Activated CD4-positive, alpha-beta memory T cell treated with anti-CD3 and anti-CD28 coated beads for 36 hours (primary cell): ENCODE measurements at regions of chr12 and their contacts with region 1.

Region 1: GRCh38 chr12:122123051-122123760 is 44.6 kb downstream of the MLXIP start:
- DNase-seq: peak; percentile 79
- H3K4me3 Mint-ChIP-seq: no peak overlapping the region
- H3K27ac Mint-ChIP-seq: no peak overlapping the region
- H3K4me1 Mint-ChIP-seq: peaks cover 25% of the 10 kb centered on the region
- H3K27me3 Mint-ChIP-seq: no peaks in the 10 kb centered on the region

Region 2: DNA sequence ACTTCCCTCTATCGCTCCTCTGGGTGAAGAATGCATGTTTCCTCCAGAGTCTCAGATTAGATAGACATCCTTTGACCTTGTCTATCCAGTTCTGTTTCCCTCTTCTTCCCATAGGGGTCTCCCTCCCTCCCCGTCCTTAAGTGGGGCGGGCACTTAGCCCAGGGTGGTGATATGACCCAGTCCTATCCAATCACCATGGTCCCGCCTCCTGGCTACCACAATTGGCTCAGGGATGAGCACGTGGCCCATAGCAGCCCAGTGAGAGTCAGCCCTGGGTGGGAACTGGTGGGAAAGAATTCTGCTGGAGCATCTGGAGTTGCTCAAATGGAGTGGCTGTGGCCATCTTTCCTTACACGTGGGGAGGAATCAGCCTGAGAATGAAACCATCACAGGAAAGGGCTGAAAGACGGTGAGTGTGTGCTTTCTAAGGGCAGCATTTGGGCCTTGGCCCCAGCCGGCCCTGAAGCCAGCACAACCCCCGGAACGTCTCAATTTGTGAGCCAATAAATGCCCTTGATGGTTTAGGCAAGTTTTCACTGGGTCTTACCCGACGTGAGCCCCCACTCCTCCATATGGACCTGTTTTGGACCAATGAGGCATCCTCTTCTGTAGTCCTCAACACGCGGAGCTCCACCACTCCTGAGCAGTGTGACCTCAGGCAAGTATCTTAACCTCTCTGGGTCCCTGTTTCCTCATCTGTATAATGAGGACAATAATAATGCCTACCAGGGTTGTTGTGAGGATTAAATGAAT is 59.0 kb before region 1 on chr12:
- CTCF ChIA-PET with region 1: interaction called, 25 read pairs
- POLR2A ChIA-PET with region 1: no interaction called
- intact Hi-C with region 1: no loop called
- DNase-seq: peak; percentile 58
- H3K4me3 Mint-ChIP-seq: no peak overlapping the region
- H3K27ac Mint-ChIP-seq: no peak overlapping the region
- H3K4me1 Mint-ChIP-seq: peaks cover 10% of the 10 kb centered on the region
- H3K27me3 Mint-ChIP-seq: no peaks in the 10 kb centered on the region

Region 3: DNA sequence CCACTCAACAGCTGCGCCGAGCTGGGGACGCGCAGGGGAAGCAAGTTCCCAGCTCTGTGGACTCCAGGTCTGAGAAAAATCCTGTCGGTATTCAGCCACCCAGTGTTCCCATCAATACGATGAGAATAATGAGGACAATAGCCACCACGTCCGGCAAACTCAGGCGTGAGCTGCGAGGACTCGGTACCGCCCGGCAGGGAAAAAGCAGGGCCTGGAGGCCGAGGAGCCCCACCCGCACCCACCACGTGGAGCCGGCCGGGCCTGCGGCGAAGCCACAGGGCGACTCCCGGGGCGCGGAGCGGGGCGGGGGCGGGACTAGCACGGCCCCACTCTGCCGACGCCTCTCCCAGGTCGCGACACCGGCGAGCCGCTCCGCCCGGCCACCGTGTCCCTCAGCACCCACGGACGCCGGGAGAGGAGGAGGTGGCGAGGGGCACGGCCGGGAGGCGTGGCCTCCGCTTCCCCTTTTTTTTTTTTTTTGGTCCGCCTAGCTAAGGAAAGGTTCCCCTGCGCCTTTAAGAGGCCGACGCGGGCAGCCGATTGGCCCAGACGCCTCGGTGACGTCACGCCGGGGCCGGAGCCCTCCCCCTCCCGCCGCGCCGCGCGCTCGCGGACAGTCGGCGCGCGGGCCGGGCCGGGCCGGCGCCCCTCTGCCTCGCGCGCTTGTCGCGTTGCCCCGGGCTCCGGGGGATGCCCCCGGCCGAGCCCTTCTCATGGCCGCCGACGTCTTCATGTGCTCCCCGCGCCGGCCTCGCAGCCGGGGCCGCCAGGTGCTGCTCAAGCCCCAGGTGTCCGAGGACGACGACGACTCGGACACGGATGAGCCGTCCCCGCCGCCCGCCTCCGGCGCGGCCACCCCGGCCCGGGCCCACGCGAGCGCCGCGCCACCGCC is 44.8 kb before region 1 on chr12 and contains the start of gene MLXIP:
- CTCF ChIA-PET with region 1: interaction called, 34 read pairs
- POLR2A ChIA-PET with region 1: no interaction called
- intact Hi-C with region 1: loop called (anchors 5 kb)
- DNase-seq: peak; percentile 93
- H3K4me3 Mint-ChIP-seq: peak within 1 kb of the TSS; percentile 83
- H3K27ac Mint-ChIP-seq: peak within 1 kb of the TSS; percentile 8
- H3K4me1 Mint-ChIP-seq: peaks cover 45% of the 10 kb centered on the region
- H3K27me3 Mint-ChIP-seq: no peaks in the 10 kb centered on the region
- total RNA-seq, gene MLXIP: 17.5 to 19.6 TPM

Region 4: GRCh38 chr12:122090759-122091515 is 32.3 kb before region 1 on chr12:
- CTCF ChIA-PET with region 1: interaction called, 12 read pairs
- POLR2A ChIA-PET with region 1: no interaction called
- intact Hi-C with region 1: no loop called
- DNase-seq: no peak
- H3K4me3 Mint-ChIP-seq: no peak overlapping the region
- H3K27ac Mint-ChIP-seq: no peak overlapping the region
- H3K4me1 Mint-ChIP-seq: peaks cover 44% of the 10 kb centered on the region
- H3K27me3 Mint-ChIP-seq: no peaks in the 10 kb centered on the region

Region 5: DNA sequence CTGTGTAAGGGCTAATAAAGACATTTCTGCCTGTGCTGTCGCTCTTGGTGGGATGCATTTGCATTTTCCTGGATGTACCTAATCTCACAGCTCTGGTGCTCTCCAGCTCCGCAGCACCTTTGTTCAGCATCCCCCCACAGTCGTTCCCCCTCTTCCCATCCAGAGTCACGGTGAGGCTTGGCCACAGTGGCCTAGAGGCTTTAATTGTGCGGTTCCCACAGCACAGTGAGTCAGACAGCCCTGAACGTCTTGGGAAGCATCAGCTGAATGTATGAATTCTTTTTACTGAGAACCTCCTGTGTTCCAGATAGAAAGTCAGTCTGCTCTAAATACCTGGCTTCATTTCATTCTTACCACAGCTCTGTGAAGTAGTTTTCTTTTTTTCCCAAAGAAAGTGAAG is 15.9 kb before region 1 on chr12:
- CTCF ChIA-PET with region 1: interaction called, 15 read pairs
- POLR2A ChIA-PET with region 1: no interaction called
- intact Hi-C with region 1: no loop called
- DNase-seq: no peak
- H3K4me3 Mint-ChIP-seq: no peak overlapping the region
- H3K27ac Mint-ChIP-seq: no peak overlapping the region
- H3K4me1 Mint-ChIP-seq: peaks cover 64% of the 10 kb centered on the region
- H3K27me3 Mint-ChIP-seq: no peaks in the 10 kb centered on the region

Region 6: GRCh38 chr12:122306407-122306806 is 183.2 kb after region 1 on chr12:
- CTCF ChIA-PET with region 1: no interaction called
- POLR2A ChIA-PET with region 1: no interaction called
- intact Hi-C with region 1: no loop called
- DNase-seq: no peak
- H3K4me3 Mint-ChIP-seq: no peak overlapping the region
- H3K27ac Mint-ChIP-seq: no peak overlapping the region
- H3K4me1 Mint-ChIP-seq: no peaks in the 10 kb centered on the region
- H3K27me3 Mint-ChIP-seq: no peaks in the 10 kb centered on the region